HepG2 (cell line): ENCODE measurements at regions of chr17 and their contacts with region 1.

Region 1: DNA sequence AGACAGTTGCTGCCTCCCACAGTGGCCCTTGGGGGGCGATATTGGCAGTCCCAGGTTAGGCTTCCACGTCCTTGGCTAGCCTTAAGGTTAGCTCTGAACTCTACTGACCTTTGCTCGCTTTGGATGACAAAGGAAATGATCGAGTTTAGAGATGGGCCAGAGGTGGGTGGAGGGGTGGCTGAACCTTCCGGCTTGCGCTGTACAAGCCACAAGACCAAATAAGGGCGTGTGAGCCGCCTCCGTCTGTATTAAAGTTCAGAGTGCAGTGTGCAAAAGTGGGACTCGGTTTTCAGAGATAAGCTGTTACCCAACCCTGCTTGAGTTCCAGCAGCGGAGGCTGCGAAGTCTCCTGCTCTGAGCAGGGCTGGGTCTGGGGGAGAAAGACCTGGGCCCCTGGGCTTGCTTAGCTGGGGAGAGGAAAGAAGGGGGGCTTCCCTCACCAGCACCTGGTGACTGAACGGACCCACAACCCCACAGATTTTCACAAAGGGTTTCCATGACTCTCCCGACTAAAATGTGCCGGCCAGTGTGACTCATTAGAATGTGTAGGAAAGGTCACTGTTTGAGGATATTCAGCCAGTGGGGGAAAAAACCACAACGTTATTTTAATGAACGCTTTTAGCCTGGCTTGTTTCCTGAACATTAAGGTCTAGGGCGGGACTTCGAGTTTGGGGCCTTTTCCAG is 67.2 kb downstream of the CENPV start:
- DNase-seq: peak; percentile 99
- ATAC-seq: peak; percentile 95
- H3K4me3 ChIP-seq: peak overlapping the region in 2 of 3 experiments; percentile 34 to 45; a peak in 5 of 6 replicates
- H3K27ac ChIP-seq: peak overlapping the region; percentile 95
- H3K4me1 ChIP-seq: peaks cover 79% of the 10 kb centered on the region
- H3K27me3 ChIP-seq: no peaks in the 10 kb centered on the region; a peak in 1 of 5 replicates
- CTCF ChIP-seq: peak; percentile 99
- EP300 ChIP-seq: peak; percentile 55 to 76; a peak in 3 of 4 replicates
- POLR2A ChIP-seq: peak; percentile 81 to 88
- RAD21 ChIP-seq: peak; percentile 95

Region 2: DNA sequence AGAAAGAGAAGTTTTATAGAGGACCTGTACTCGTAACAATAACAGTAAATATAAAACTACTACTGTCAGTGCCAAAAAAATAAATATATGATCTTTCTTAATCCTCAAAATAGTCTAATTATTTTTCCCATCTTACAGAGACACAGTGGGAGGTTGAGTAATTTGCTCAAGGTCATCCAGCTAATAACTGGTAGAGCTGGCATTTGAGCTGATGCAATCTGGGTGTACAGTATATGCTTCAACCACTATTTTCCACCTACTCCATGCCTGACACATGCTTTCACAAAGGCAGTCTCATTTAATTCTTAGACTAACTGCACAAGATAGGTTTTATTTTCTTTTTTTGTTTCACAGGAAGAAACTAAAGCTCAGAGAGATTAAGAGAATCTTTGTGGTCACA is 35.5 kb before region 1 on chr17:
- CTCF ChIA-PET with region 1: no interaction called
- POLR2A ChIA-PET with region 1: interaction called, 26 read pairs
- in situ Hi-C with region 1: no loop called
- intact Hi-C with region 1: no loop called
- DNase-seq: peak; percentile 70
- ATAC-seq: peak; percentile 62
- H3K4me3 ChIP-seq: no peak overlapping the region
- H3K27ac ChIP-seq: peak overlapping the region; percentile 69
- H3K4me1 ChIP-seq: peaks cover 87% of the 10 kb centered on the region
- H3K27me3 ChIP-seq: no peaks in the 10 kb centered on the region
- CTCF ChIP-seq: no peak
- EP300 ChIP-seq: no peak; a peak in 1 of 4 replicates
- POLR2A ChIP-seq: no peak
- RAD21 ChIP-seq: no peak

Region 3: DNA sequence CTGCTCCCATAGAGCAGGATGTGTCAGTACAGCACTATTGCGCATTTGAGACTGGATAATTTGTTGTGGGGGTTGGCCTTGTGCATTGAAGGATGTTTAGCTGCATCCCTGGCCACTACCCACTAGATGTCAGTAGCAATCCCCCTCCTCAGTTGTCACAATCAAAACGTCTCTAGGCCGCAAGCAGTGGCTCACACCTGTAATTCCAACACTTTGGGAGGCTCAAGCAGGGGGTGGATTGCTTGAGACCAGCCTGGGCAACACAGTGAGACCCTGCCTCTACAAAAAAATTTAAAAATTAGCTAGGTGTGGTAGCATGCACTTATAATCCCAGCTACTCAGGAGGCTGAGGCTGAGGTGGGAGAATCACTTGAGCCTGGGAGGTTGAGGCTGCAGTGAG is 18.7 kb after region 1 on chr17:
- CTCF ChIA-PET with region 1: interaction called, 8 read pairs
- POLR2A ChIA-PET with region 1: interaction called, 258 read pairs
- in situ Hi-C with region 1: no loop called
- intact Hi-C with region 1: loop called (anchors 2 kb)
- DNase-seq: peak; percentile 63
- ATAC-seq: peak; percentile 86
- H3K4me3 ChIP-seq: no peak overlapping the region
- H3K27ac ChIP-seq: no peak overlapping the region
- H3K4me1 ChIP-seq: peaks cover 79% of the 10 kb centered on the region
- H3K27me3 ChIP-seq: no peaks in the 10 kb centered on the region
- CTCF ChIP-seq: peak; percentile 86
- EP300 ChIP-seq: no peak
- POLR2A ChIP-seq: no peak
- RAD21 ChIP-seq: peak; percentile 88

Region 4: DNA sequence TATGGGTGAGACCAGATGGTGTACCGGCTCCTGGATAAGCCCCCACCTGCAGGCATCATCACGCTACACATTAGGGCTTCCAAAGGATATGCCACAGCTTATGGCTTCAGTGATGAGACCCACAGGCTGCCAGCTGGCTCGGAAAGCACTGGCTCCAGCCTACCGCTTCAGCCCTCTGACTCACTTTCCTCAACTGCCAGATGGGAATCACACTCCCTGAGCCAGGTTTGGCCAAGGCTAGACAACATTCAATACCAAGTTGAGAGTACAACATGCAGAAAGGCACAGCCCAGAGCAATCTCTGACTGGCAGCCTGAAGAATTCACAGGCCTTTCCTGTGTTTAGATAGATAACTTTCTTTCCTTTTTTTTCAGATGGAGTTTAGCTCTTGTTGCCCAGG is 56.9 kb after region 1 on chr17:
- CTCF ChIA-PET with region 1: no interaction called
- POLR2A ChIA-PET with region 1: interaction called, 68 read pairs
- in situ Hi-C with region 1: no loop called
- intact Hi-C with region 1: no loop called
- DNase-seq: no peak
- ATAC-seq: peak; percentile 10; the same call in 2 of the 3 replicates
- H3K4me3 ChIP-seq: no peak overlapping the region
- H3K27ac ChIP-seq: no peak overlapping the region
- H3K4me1 ChIP-seq: no peaks in the 10 kb centered on the region
- H3K27me3 ChIP-seq: no peaks in the 10 kb centered on the region
- CTCF ChIP-seq: no peak
- EP300 ChIP-seq: no peak
- POLR2A ChIP-seq: peak in 1 of 2 experiments; percentile 37; a peak in 1 of 4 replicates
- RAD21 ChIP-seq: no peak

Region 5: GRCh38 chr17:16428098-16428882 is 142.2 kb after region 1 on chr17:
- CTCF ChIA-PET with region 1: no interaction called
- POLR2A ChIA-PET with region 1: interaction called, 6 read pairs
- in situ Hi-C with region 1: loop called (anchors 5 kb)
- intact Hi-C with region 1: no loop called
- DNase-seq: peak; percentile 64
- ATAC-seq: peak; percentile 87
- H3K4me3 ChIP-seq: no peak overlapping the region
- H3K27ac ChIP-seq: no peak overlapping the region
- H3K4me1 ChIP-seq: peaks cover 37% of the 10 kb centered on the region
- H3K27me3 ChIP-seq: no peaks in the 10 kb centered on the region
- CTCF ChIP-seq: peak; percentile 88
- EP300 ChIP-seq: no peak
- POLR2A ChIP-seq: no peak
- RAD21 ChIP-seq: peak; percentile 57; the same call in 1 of the 2 replicates

Region 6: GRCh38 chr17:16506188-16506587 is 220.1 kb after region 1 on chr17:
- CTCF ChIA-PET with region 1: no interaction called
- POLR2A ChIA-PET with region 1: no interaction called
- in situ Hi-C with region 1: no loop called
- intact Hi-C with region 1: no loop called
- DNase-seq: no peak
- ATAC-seq: no peak
- H3K4me3 ChIP-seq: no peak overlapping the region
- H3K27ac ChIP-seq: no peak overlapping the region
- H3K4me1 ChIP-seq: 0 out of 2 replicates have a peak, but pooled peaks cover 4% of the 10 kb centered on the region
- H3K27me3 ChIP-seq: 0 out of 5 replicates have a peak, but pooled peaks cover 0 to 3% of the 10 kb centered on the region in 2 experiments
- CTCF ChIP-seq: no peak
- EP300 ChIP-seq: no peak
- POLR2A ChIP-seq: no peak
- RAD21 ChIP-seq: no peak